ENCODE measurements at regions of chr1 and their contacts with region 1.

Region 1: DNA sequence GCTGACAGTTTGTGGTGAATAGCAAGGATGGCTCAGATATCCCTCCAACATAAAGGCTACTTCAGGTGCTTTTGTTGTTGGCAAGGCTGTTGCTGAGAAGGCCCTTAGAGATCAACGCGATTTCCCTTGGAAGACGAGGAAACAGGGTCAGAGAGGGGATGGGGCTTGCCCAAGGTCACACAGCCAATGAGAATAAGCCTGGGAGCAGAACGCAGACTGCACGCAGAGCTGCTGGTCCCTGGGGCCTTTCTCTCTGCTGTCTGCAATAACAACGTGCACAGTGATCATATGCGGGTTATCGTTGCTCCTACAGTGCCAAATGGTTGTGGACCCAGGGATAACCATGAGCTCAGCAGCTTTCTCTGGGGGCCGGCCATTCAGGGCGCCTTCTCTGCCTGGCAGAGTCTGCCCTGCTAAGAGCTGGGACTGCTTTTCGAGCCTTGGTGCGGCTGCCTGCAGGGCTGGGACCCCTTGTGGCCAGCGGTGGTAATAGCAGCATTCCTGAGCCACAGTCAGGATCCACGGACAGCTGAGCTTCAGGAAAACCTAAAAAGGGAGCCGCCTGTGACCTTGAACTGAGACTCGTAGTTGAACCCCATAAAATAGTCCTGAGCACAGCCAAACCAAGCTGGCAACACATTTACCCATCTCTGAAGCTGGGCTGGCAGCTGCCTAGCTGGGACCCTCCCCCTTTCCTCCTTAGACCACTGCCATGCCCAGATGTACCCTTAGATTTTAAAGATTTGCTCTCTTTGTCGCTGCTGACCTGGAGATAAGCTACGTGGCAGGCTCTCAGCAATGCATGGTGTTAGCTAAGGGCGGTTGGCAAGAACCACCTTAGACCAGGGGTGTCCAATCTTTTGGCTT is 39.8 kb downstream of the HTR6 start:
- DNase-seq: peak; percentile 4
- H3K4me3 ChIP-seq: no peak overlapping the region
- H3K27me3 ChIP-seq: no peaks in the 10 kb centered on the region
- CTCF ChIP-seq: peak; percentile 97

Region 2: GRCh38 chr1:19668893-19669292 is 35.6 kb before region 1 on chr1:
- CTCF ChIA-PET with region 1: interaction called, 19 read pairs
- POLR2A ChIA-PET with region 1: no interaction called
- DNase-seq: no peak
- H3K4me3 ChIP-seq: no peak overlapping the region
- H3K27me3 ChIP-seq: peaks cover 33% of the 10 kb centered on the region
- CTCF ChIP-seq: no peak

Region 3: GRCh38 chr1:19682257-19682656 is 22.2 kb before region 1 on chr1:
- CTCF ChIA-PET with region 1: interaction called, 19 read pairs
- POLR2A ChIA-PET with region 1: interaction called, 4 read pairs
- DNase-seq: peak; percentile 59
- H3K4me3 ChIP-seq: no peak overlapping the region
- H3K27me3 ChIP-seq: no peaks in the 10 kb centered on the region; the same call in 1 of the 2 replicates
- CTCF ChIP-seq: no peak

Region 4: DNA sequence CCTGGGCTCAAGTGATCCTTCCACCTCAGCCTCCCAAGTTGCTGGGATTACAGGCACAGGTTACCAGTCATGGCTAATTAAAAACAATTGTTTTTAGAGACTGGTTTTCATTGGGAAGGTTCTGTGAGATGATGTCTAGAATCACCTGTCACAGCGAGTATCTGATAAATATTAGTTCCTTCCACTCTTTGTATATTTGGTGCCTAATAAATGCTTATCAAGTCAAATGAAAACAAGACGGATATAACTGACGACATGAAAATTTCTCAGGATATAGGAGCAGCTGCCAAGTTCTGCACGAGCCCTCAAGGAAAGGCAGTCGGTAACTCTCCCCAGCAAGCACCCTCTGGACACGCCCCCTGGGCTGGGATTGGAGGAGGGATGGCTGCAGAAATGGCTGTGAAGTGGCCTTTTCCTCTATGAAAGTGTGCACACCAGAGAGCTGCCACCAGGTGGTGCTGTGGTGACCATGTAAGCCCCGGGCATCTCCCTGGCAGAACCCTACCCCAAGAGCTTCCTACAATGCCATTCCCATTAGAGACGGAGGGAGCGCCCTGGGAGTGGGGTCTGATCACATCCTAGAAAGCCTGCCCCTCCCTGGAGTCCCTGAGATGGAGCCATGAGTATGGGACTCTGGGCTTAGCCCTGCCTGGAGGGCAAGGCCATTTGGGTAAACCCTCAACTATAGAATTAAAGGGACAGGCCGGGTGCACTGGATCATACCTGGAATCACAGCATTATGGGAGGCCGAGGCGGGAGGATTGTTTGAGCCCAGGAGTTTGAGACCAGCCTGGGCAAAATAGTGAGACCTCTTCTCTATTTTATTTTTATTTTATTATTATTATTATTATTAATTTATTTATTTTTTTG is 11.1 kb after region 1 on chr1:
- CTCF ChIA-PET with region 1: interaction called, 25 read pairs
- POLR2A ChIA-PET with region 1: no interaction called
- DNase-seq: peak; percentile 78
- H3K4me3 ChIP-seq: no peak overlapping the region
- H3K27me3 ChIP-seq: no peaks in the 10 kb centered on the region
- CTCF ChIP-seq: peak; percentile 92

Measured in BJ (cell line).